ENCODE measurements at regions of chr16 and their contacts with region 1.

Region 1: GRCh38 chr16:71961066-71962039 is 38.8 kb downstream of the PKD1L3 start:
- DNase-seq: peak; percentile 92
- ATAC-seq: peak; percentile 97
- H3K4me3 Mint-ChIP-seq: no peak overlapping the region
- H3K27ac Mint-ChIP-seq: no peak overlapping the region
- H3K4me1 Mint-ChIP-seq: peaks cover 5% of the 10 kb centered on the region
- H3K27me3 Mint-ChIP-seq: no peaks in the 10 kb centered on the region

Region 2: DNA sequence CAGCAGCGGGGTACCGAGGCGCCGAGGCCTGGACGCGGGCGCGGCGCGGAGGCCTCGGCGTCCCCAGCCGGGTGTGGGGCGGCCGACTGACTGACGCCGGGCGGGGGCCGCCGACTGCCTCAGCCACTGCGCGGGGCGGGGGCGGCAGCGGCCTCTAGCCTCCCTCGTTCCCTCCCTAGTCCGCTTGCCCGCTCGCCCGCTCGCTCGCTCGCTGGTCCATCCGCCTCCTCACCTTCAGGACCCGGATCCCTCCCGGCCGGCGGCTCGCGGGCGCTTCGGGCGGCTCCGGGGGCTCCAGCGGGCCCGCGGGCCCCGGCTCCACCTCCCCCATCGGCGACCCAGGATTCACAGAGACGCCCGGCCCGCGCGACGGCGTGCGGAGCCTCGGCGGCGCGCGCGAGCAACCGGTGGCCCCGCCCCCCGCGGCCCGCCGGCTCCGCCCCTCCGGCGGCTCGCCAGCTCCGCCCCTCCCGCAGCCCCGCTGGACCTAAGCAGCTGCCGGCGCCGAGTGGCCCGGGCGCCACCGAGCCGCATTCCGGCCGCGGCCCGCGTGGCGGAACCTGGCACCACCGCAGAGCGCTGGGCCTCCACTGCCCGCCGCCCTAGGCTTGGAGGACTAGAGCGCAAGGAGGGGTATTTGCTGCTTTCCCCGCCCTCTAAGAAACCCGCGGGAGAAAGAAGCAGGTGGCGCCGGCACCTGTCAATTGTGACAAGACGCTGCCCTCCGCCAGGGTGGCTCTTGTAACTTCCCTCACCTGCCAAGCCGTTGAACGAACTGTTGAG is 237.6 kb before region 1 on chr16:
- CTCF ChIA-PET with region 1: no interaction called
- POLR2A ChIA-PET with region 1: no interaction called
- intact Hi-C with region 1: loop called in 1 of 2 experiments (anchors 2 kb)
- DNase-seq: peak; percentile 87
- ATAC-seq: peak; percentile 87
- H3K4me3 Mint-ChIP-seq: peak overlapping the region; percentile 95
- H3K27ac Mint-ChIP-seq: peak overlapping the region; percentile 68
- H3K4me1 Mint-ChIP-seq: peaks cover 16% of the 10 kb centered on the region
- H3K27me3 Mint-ChIP-seq: no peaks in the 10 kb centered on the region

Region 3: DNA sequence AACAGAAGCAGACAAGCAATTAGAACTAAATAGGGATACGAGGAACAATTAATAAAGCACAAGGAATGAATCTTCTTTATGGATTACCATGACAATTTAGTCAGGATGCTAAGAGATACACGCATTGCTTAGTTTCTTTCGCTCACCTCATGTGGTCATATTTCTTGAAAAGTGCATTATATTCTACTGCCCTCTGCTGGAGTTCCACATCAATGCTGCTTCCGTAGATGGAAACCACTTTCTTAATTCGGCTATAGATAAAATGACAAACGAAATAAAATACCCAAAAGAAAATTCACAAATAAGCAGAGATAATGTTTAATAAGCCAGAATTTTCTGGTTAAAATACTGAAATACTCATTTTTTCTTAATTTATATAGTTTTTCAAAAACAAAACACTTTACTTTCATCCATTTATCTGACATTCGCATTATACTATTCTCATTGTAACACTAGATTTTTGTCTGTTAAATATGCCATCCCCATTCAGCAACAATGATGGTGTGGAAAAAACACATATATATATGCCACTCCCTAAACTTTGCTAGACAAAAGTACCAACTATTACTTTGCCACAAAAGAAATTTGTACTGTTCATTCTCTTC is 214.8 kb before region 1 on chr16:
- CTCF ChIA-PET with region 1: interaction called, 4 read pairs
- POLR2A ChIA-PET with region 1: no interaction called
- intact Hi-C with region 1: loop called in 1 of 2 experiments (anchors 2 kb)
- DNase-seq: peak; percentile 35
- ATAC-seq: peak; percentile 71
- H3K4me3 Mint-ChIP-seq: no peak overlapping the region
- H3K27ac Mint-ChIP-seq: peak overlapping the region; percentile 8
- H3K4me1 Mint-ChIP-seq: peaks cover 6% of the 10 kb centered on the region
- H3K27me3 Mint-ChIP-seq: no peaks in the 10 kb centered on the region

Region 4: DNA sequence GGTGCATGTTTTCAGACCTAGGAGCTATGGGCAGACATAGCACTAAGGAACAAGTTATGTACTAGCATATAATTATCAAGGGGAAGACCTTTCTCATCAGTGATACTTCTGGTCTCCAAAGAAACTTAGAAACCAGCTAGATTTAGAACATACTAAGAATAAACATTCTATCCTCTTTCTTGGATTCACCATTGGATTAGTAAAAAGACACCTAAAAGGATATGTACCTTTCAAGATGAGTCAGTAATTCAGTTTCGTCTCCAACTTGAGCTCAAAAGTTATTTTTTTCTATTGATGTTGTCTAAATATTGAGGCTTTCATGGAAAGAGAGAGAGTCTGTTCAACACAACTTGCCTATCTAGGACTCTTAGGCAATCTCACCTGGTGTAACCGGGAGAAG is 90.5 kb before region 1 on chr16:
- CTCF ChIA-PET with region 1: interaction called, 12 read pairs
- POLR2A ChIA-PET with region 1: no interaction called
- intact Hi-C with region 1: no loop called
- DNase-seq: no peak
- ATAC-seq: peak; percentile 20
- H3K4me3 Mint-ChIP-seq: no peak overlapping the region
- H3K27ac Mint-ChIP-seq: no peak overlapping the region
- H3K4me1 Mint-ChIP-seq: peaks cover 25% of the 10 kb centered on the region
- H3K27me3 Mint-ChIP-seq: no peaks in the 10 kb centered on the region

Region 5: DNA sequence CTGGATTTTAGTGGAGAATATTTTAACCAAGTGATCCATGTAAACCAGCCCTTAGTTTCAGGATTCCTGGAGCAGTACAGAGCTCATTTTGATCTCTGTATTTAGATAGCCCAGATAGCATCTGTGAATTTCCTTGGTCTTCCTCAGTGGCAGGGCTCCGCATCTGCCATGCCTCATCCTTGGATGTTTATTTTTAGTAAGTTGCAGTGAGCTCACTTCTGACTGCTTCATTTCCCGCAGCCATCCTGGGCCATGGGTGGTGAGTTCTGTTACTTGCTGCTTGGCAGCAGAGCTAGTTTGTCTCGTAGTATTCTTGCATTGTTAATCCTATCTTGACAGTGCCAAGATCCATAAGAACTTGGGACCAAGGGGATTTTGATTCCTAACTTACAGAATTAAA is 32.3 kb before region 1 on chr16:
- CTCF ChIA-PET with region 1: interaction called, 11 read pairs
- POLR2A ChIA-PET with region 1: no interaction called
- intact Hi-C with region 1: no loop called
- DNase-seq: no peak
- ATAC-seq: no peak
- H3K4me3 Mint-ChIP-seq: no peak overlapping the region
- H3K27ac Mint-ChIP-seq: no peak overlapping the region
- H3K4me1 Mint-ChIP-seq: peaks cover 9% of the 10 kb centered on the region
- H3K27me3 Mint-ChIP-seq: no peaks in the 10 kb centered on the region

Region 6: DNA sequence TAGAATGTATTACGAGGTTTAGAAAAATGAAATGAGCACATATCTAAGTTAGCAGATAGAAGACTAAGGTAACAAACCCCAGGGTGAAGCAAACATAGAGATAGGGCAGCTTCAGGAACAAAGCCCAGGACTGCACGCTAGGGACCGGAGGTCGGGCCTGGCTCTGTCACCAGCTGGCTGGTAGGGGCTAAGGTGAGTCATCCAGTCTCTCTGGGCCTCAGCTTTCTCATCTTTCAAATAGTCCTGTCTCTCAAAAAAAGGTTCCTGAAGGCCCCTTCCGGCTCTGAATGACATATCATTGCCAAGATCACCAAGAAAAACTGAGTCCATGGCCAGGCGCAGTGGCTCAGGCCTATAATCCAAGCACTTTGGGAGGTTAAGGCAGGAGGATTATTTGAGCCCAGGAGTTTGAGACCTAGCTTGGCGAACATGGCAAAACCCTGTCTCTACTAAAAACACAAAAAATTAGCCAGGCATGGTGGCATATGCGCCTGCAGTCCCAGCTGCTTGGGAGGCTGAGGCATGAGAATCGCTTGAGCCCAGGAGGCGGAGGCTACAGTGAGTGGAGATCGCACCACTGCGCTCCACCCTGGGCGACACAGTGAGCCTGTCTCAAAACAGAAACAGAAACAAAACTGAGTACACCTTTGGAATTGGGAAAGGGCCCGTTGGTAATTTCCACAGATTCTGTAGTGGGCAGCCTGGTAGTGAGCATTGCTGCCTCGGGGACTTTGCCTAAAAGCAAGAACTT is 12.9 kb after region 1 on chr16:
- CTCF ChIA-PET with region 1: interaction called, 15 read pairs
- POLR2A ChIA-PET with region 1: no interaction called
- intact Hi-C with region 1: no loop called
- DNase-seq: no peak
- ATAC-seq: no peak
- H3K4me3 Mint-ChIP-seq: no peak overlapping the region
- H3K27ac Mint-ChIP-seq: no peak overlapping the region
- H3K4me1 Mint-ChIP-seq: no peaks in the 10 kb centered on the region
- H3K27me3 Mint-ChIP-seq: no peaks in the 10 kb centered on the region